Left lung (tissue), 14 donors: ENCODE measurements at regions of chr4 and their contacts with region 1.

Region 1: DNA sequence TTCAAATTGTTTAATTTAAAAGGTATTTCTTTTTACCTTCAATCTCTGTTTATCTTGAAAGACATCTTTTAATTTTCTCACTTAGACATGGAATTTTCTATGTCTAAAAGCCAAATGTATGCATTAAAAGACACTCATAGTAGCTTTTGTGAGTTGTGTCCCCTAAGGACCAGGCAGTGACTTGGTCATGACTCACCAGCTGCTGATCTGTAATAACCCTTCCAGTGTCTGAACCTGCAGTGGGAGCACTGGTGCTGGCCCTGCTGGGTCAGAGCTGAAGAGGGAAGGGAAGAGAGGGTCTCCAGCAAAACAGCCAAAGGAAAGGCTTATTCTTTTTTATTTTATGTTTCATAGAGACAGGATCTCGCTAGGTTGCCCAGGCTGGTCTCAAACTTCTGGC is 31.1 kb upstream of the SH3D19 start:
- DNase-seq: no peak
- ATAC-seq: no peak
- H3K4me3 ChIP-seq: no peak overlapping the region
- H3K27ac ChIP-seq: no peak overlapping the region
- H3K4me1 ChIP-seq: no peaks in the 10 kb centered on the region
- H3K27me3 ChIP-seq: no peaks in the 10 kb centered on the region
- CTCF ChIP-seq: no peak

Region 2: GRCh38 chr4:151129801-151130200 is 226.7 kb before region 1 on chr4:
- intact Hi-C with region 1: loop called in 1 of 2 experiments (anchors 10 kb)
- DNase-seq: no peak
- ATAC-seq: no peak
- H3K4me3 ChIP-seq: no peak overlapping the region
- H3K27ac ChIP-seq: peak overlapping the region in 1 of 2 donors; percentile 33
- H3K4me1 ChIP-seq: no peaks in the 10 kb centered on the region
- H3K27me3 ChIP-seq: no peaks in the 10 kb centered on the region
- CTCF ChIP-seq: no peak

Region 3: DNA sequence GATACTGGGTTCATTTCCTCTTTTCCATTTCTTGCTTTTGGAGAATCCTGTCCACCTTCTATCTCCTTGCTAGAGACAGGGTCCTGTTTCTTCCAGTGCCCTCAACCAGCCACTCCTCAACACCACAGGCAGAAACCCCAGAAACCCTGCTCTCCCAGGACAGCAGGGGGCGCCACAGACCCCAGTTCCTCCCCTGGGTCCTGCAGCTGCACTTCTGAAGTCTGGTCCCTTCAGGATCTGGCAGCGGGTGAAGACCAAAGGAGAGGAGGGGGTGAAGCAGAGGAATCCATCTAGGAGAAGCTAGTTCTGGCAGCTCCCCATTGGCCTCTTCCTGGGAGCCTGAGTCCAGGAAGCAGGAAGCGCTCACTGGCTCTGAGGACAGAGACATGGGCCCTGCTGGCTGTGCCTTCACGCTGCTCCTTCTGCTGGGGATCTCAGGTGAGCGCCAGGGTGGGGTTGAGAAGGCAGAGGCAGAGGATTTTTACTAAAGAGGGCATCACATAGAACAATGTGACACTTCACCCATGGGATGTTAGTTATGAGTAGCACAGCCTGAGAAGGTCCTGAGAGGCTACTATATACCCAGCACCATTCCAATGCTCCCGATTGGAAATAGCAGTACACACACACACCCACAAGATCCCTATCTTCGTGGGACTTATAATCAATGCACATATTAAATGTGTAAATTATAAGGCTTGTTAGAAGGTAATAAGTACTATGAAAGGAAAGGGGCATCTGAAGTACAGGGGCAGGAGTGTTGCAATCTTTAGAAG is 79.5 kb before region 1 on chr4 and contains the start of gene PRSS48:
- intact Hi-C with region 1: loop called in 1 of 2 experiments (anchors 10 kb)
- DNase-seq: peak; percentile 22 to 82 (median 46)
- ATAC-seq: peak; percentile 95
- H3K4me3 ChIP-seq: no peak within 1 kb of the TSS
- H3K27ac ChIP-seq: no peak within 1 kb of the TSS
- H3K4me1 ChIP-seq: no peaks in the 10 kb centered on the region
- H3K27me3 ChIP-seq: no peaks in the 10 kb centered on the region
- CTCF ChIP-seq: peak; percentile 60 to 65
- polyA plus RNA-seq, gene PRSS48: 0.20 to 0.21 TPM in 2 of 6 donors, not detected in the others